PC-3 (cell line): ENCODE measurements at regions of chr6 and their contacts with region 1.

Region 1: DNA sequence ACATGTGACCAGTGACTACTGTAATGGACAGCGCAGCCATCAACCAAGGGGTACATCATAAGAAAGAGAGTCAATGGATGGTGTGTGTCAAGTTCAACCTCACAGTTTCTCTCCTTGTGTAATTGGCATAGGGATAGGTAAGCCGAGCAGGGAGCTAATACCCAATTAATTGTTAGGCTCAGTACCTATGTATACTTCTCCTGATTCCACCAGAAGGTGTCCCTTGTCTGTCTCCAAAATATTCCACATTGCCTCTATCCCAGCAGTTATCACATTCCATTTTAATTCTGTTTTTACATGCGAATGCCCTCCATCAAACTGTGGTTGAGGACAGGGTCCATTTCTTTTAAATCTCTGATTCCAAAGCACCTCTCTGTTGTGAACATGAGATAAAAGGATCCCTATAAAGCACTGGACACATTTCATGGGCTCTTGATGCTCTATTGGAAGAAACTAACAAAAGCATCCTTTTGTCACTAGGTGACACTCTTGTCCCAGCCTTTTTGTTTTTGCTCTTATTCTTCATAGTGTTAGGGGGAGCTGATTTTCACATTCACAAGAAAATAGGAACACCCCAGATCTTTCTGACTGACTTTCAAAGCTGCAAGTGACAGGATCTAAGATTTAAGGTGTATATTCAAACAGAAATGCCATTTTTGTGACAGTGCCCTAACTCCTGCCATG is 38.9 kb downstream of the FBXO9 start:
- DNase-seq: peak; percentile 58
- ATAC-seq: peak; percentile 80
- H3K4me3 ChIP-seq: no peak overlapping the region
- H3K27ac ChIP-seq: no peak overlapping the region
- H3K4me1 ChIP-seq: peaks cover 7% of the 10 kb centered on the region; the same call in 1 of the 2 replicates
- H3K27me3 ChIP-seq: no peaks in the 10 kb centered on the region
- CTCF ChIP-seq: peak; percentile 84

Region 2: GRCh38 chr6:53159558-53159957 is 55.4 kb after region 1 on chr6:
- CTCF ChIA-PET with region 1: interaction called, 5 read pairs
- POLR2A ChIA-PET with region 1: no interaction called
- intact Hi-C with region 1: loop called (anchors 1 kb)
- DNase-seq: peak; percentile 54
- ATAC-seq: peak; percentile 55; the same call in 1 of the 2 replicates
- H3K4me3 ChIP-seq: no peak overlapping the region
- H3K27ac ChIP-seq: no peak overlapping the region
- H3K4me1 ChIP-seq: peaks cover 4% of the 10 kb centered on the region; the same call in 1 of the 2 replicates
- H3K27me3 ChIP-seq: no peaks in the 10 kb centered on the region
- CTCF ChIP-seq: peak; percentile 36; the same call in 1 of the 2 replicates

Region 3: GRCh38 chr6:53199156-53199555 is 95.0 kb after region 1 on chr6:
- CTCF ChIA-PET with region 1: no interaction called
- POLR2A ChIA-PET with region 1: no interaction called
- intact Hi-C with region 1: no loop called
- DNase-seq: no peak
- ATAC-seq: no peak
- H3K4me3 ChIP-seq: no peak overlapping the region
- H3K27ac ChIP-seq: no peak overlapping the region
- H3K4me1 ChIP-seq: no peaks in the 10 kb centered on the region
- H3K27me3 ChIP-seq: no peaks in the 10 kb centered on the region
- CTCF ChIP-seq: no peak

Region 4: GRCh38 chr6:53410508-53411258 is 306.5 kb after region 1 on chr6:
- CTCF ChIA-PET with region 1: no interaction called
- POLR2A ChIA-PET with region 1: no interaction called
- intact Hi-C with region 1: loop called (anchors 2 kb)
- DNase-seq: peak; percentile 71
- ATAC-seq: peak; percentile 94
- H3K4me3 ChIP-seq: no peak overlapping the region
- H3K27ac ChIP-seq: no peak overlapping the region
- H3K4me1 ChIP-seq: peaks cover 3% of the 10 kb centered on the region; the same call in 1 of the 2 replicates
- H3K27me3 ChIP-seq: no peaks in the 10 kb centered on the region
- CTCF ChIP-seq: peak; percentile 93

Region 5: GRCh38 chr6:53437557-53438202 is 333.5 kb after region 1 on chr6:
- CTCF ChIA-PET with region 1: interaction called, 3 read pairs
- POLR2A ChIA-PET with region 1: no interaction called
- intact Hi-C with region 1: loop called (anchors 5 kb)
- DNase-seq: peak; percentile 90
- ATAC-seq: peak; percentile 79
- H3K4me3 ChIP-seq: no peak overlapping the region
- H3K27ac ChIP-seq: no peak overlapping the region
- H3K4me1 ChIP-seq: peaks cover 20% of the 10 kb centered on the region
- H3K27me3 ChIP-seq: no peaks in the 10 kb centered on the region
- CTCF ChIP-seq: peak; percentile 94

Region 6: DNA sequence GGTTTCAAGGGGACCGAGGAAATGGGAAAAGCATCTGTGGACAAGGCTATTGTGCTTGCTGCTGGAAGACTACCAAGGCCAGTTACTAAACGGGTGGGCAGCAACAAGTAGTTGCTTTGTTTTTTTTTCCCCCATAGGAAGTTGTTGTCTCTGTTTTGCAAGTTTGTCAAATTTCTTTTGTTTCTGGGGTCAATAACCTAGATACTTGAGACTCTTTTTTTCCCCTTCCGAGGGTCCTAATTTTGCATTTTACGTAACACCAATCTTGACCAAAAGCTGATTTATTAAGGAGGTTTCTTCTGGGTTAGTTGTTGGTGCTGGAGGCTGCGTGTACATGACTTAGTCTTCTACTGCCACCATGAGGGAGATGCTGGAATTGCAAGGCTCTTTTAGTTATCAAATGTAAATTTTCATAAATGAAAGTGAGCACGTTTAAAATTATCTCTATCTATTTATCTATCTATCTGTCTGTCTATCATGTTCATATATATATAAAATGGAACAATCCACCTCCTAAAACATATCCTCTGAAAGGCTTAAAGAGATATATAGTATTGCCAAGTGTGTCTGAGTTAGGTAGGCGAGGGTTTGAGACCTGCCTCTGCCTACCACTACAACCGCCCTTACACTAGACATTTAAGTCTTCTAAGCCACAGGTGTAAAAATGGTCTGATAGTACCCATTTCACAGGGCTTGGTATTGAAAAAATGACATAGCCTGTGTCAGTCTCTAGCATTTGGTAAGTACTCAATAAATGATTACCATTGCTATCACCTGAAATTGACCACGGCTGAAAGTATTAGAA is 380.5 kb after region 1 on chr6:
- CTCF ChIA-PET with region 1: interaction called, 6 read pairs
- POLR2A ChIA-PET with region 1: no interaction called
- intact Hi-C with region 1: loop called (anchors 1 kb)
- DNase-seq: peak; percentile 87
- ATAC-seq: peak; percentile 43
- H3K4me3 ChIP-seq: peak overlapping the region; percentile 32; the same call in 1 of the 2 replicates
- H3K27ac ChIP-seq: no peak overlapping the region
- H3K4me1 ChIP-seq: peaks cover 12% of the 10 kb centered on the region; the same call in 1 of the 2 replicates
- H3K27me3 ChIP-seq: no peaks in the 10 kb centered on the region
- CTCF ChIP-seq: peak; percentile 95